MCF 10A (cell line): ENCODE measurements at regions of chr6 and their contacts with region 1.

Region 1: GRCh38 chr6:63307581-63308246 is 12.1 kb downstream of the LGSN start:
- DNase-seq: peak; percentile 74
- H3K4me3 Mint-ChIP-seq: no peak overlapping the region
- H3K27ac Mint-ChIP-seq: no peak overlapping the region
- H3K4me1 Mint-ChIP-seq: peaks cover 6% of the 10 kb centered on the region
- H3K27me3 Mint-ChIP-seq: no peaks in the 10 kb centered on the region
- CTCF ChIP-seq: peak; percentile 50

Region 2: GRCh38 chr6:63319939-63320338 is 12.2 kb after region 1 on chr6 and contains the start of gene LGSN:
- CTCF ChIA-PET with region 1: interaction called, 13 read pairs
- POLR2A ChIA-PET with region 1: no interaction called
- intact Hi-C with region 1: no loop called
- DNase-seq: no peak
- H3K4me3 Mint-ChIP-seq: no peak within 1 kb of the TSS
- H3K27ac Mint-ChIP-seq: no peak within 1 kb of the TSS
- H3K4me1 Mint-ChIP-seq: no peaks in the 10 kb centered on the region
- H3K27me3 Mint-ChIP-seq: no peaks in the 10 kb centered on the region
- CTCF ChIP-seq: no peak
- total RNA-seq, gene LGSN: not detected in 2 replicates

Region 3: GRCh38 chr6:63347599-63347998 is 39.9 kb after region 1 on chr6:
- CTCF ChIA-PET with region 1: interaction called, 12 read pairs
- POLR2A ChIA-PET with region 1: interaction called, 4 read pairs
- intact Hi-C with region 1: no loop called
- DNase-seq: peak; percentile 72
- H3K4me3 Mint-ChIP-seq: no peak overlapping the region
- H3K27ac Mint-ChIP-seq: peak overlapping the region; percentile 43
- H3K4me1 Mint-ChIP-seq: peaks cover 13% of the 10 kb centered on the region
- H3K27me3 Mint-ChIP-seq: no peaks in the 10 kb centered on the region
- CTCF ChIP-seq: no peak

Region 4: GRCh38 chr6:63410435-63411426 is 103.0 kb after region 1 on chr6:
- CTCF ChIA-PET with region 1: no interaction called
- POLR2A ChIA-PET with region 1: no interaction called
- intact Hi-C with region 1: no loop called
- DNase-seq: no peak
- H3K4me3 Mint-ChIP-seq: no peak overlapping the region
- H3K27ac Mint-ChIP-seq: no peak overlapping the region
- H3K4me1 Mint-ChIP-seq: no peaks in the 10 kb centered on the region
- H3K27me3 Mint-ChIP-seq: no peaks in the 10 kb centered on the region
- CTCF ChIP-seq: no peak